Activated CD4-positive, alpha-beta memory T cell treated with anti-CD3 and anti-CD28 coated beads for 36 hours (primary cell): ENCODE measurements at regions of chr3 and their contacts with region 1.

Region 1: DNA sequence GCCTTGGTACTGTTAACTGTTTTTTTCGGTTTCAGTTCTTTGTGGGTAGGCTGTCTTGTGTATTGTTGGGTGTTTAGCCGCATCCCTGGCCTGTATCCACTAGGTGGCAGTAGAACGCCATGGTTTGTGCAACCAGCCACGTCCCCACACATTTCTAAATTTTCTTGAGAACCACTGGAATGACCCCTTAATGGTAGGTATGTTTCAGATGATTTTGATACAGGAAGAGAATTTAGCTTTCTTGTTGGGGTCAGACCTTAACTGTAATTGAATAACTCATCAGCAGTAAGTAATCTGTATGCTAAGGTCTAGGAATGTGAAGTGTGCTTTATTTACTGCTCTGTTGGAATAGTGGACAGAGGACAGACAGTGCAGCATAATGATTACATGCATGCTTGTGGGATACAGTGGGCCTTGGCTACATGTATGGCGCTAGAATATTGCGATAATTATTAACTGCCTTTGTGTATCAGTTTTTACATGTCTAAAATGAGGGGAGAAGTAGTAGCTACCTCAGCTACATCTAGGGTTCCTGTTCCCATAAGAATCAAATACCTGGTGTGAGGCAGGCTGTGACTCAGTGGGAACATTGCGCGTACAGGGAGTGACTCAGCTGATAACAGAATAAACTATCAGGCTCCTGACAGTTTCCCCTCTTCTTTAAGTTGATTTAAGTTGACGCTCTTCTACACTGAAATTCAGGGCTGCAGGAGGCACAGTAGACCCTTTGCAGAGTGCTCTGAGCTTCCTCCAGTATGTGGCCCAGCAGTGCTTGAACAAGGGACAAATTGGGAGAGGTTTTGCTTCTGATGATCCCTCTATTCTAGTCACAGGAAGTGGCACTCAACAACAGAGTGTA is 25.0 kb upstream of the GPR171 start:
- DNase-seq: peak; percentile 87
- H3K4me3 Mint-ChIP-seq: no peak overlapping the region
- H3K27ac Mint-ChIP-seq: peak overlapping the region; percentile 42
- H3K4me1 Mint-ChIP-seq: peaks cover 52% of the 10 kb centered on the region
- H3K27me3 Mint-ChIP-seq: no peaks in the 10 kb centered on the region

Region 2: GRCh38 chr3:150737874-150738713 is 489.9 kb before region 1 on chr3:
- CTCF ChIA-PET with region 1: no interaction called
- POLR2A ChIA-PET with region 1: no interaction called
- intact Hi-C with region 1: no loop called
- DNase-seq: peak; percentile 79
- H3K4me3 Mint-ChIP-seq: peak overlapping the region; percentile 38
- H3K27ac Mint-ChIP-seq: peak overlapping the region; percentile 99
- H3K4me1 Mint-ChIP-seq: peaks cover 73% of the 10 kb centered on the region
- H3K27me3 Mint-ChIP-seq: no peaks in the 10 kb centered on the region

Region 3: DNA sequence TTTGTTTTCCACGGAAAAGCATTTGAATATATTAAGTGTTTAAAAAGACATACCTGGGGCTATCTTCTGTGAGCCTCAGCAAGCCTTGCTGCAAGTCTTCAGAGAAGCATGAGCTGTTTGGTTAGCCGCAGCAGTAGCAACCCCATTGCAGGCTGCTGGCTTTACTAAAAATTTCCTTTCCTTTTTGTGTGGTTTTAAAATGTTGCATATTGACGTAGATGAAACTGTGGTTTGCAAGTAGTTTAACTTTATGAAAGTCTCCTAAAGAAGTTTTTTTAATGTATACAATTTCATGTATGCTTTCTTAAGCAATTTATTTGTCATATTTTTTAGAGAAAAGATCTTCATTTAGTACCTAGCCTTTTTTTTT is 25.0 kb before region 1 on chr3 and contains the start of gene GPR171:
- CTCF ChIA-PET with region 1: interaction called, 15 read pairs
- POLR2A ChIA-PET with region 1: interaction called, 7 read pairs
- intact Hi-C with region 1: no loop called
- DNase-seq: peak; percentile 84
- H3K4me3 Mint-ChIP-seq: peak within 1 kb of the TSS; percentile 86
- H3K27ac Mint-ChIP-seq: peak within 1 kb of the TSS; percentile 99
- H3K4me1 Mint-ChIP-seq: peaks cover 65% of the 10 kb centered on the region
- H3K27me3 Mint-ChIP-seq: no peaks in the 10 kb centered on the region
- total RNA-seq, gene GPR171: 70.7 to 74.0 TPM

Region 4: GRCh38 chr3:151265866-151266265 is 37.8 kb after region 1 on chr3:
- CTCF ChIA-PET with region 1: interaction called, 15 read pairs
- POLR2A ChIA-PET with region 1: interaction called, 3 read pairs
- intact Hi-C with region 1: loop called (anchors 2 kb)
- DNase-seq: no peak
- H3K4me3 Mint-ChIP-seq: no peak overlapping the region
- H3K27ac Mint-ChIP-seq: no peak overlapping the region
- H3K4me1 Mint-ChIP-seq: peaks cover 19% of the 10 kb centered on the region
- H3K27me3 Mint-ChIP-seq: no peaks in the 10 kb centered on the region

Region 5: DNA sequence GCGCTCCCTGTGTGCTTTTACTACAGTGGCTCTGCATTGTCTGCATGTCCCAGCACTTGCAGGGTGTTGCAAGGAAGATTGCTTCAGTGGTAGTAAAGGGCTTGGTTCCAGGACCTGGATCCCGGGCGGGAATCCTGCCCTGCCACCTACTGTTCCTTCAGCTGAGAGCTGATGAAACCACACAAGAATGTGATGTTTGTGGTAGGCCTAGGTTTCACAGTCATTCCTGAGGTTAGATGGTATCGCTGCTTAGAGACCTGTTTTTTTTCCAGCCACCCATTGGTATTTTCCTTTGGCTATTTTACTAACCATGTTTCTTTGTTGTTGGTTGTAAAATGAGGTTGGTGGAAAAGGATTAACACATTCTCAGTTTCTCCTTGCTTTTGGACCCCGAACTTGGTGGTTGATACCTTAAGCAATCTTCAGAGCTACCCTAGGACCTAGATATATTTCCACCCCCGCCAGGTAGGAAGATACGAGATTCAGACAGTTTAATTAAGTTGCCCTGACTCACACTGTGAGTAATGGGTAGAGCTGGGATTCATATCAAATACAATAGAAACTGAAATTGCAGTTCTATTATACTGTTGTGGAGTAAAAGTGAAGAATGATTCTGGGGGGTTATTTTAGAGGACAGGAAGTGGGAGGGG is 77.2 kb after region 1 on chr3:
- CTCF ChIA-PET with region 1: interaction called, 18 read pairs
- POLR2A ChIA-PET with region 1: interaction called, 4 read pairs
- intact Hi-C with region 1: loop called (anchors 1 kb)
- DNase-seq: peak; percentile 52
- H3K4me3 Mint-ChIP-seq: peak overlapping the region; percentile 20
- H3K27ac Mint-ChIP-seq: peak overlapping the region; percentile 56
- H3K4me1 Mint-ChIP-seq: peaks cover 78% of the 10 kb centered on the region
- H3K27me3 Mint-ChIP-seq: peaks cover 17% of the 10 kb centered on the region

Region 6: GRCh38 chr3:151439652-151440129 is 211.7 kb after region 1 on chr3:
- CTCF ChIA-PET with region 1: interaction called, 4 read pairs
- POLR2A ChIA-PET with region 1: no interaction called
- intact Hi-C with region 1: loop called (anchors 5 kb)
- DNase-seq: no peak
- H3K4me3 Mint-ChIP-seq: no peak overlapping the region
- H3K27ac Mint-ChIP-seq: no peak overlapping the region
- H3K4me1 Mint-ChIP-seq: no peaks in the 10 kb centered on the region
- H3K27me3 Mint-ChIP-seq: no peaks in the 10 kb centered on the region